GM12878 (cell line): ENCODE measurements at regions of chr6 and their contacts with region 1.

Region 1: GRCh38 chr6:15264902-15265761 is 19.3 kb downstream of the JARID2 start:
- DNase-seq: no peak
- ATAC-seq: peak; percentile 45
- H3K4me3 ChIP-seq: peak overlapping the region; percentile 26; the same call in 1 of the 2 replicates
- H3K27ac ChIP-seq: peak overlapping the region; percentile 62
- H3K4me1 ChIP-seq: peaks cover 61% of the 10 kb centered on the region
- H3K27me3 ChIP-seq: no peaks in the 10 kb centered on the region
- CTCF ChIP-seq: no peak
- EP300 ChIP-seq: no peak
- POLR2A ChIP-seq: no peak
- RAD21 ChIP-seq: no peak

Region 2: GRCh38 chr6:14986370-14986769 is 278.8 kb before region 1 on chr6:
- CTCF ChIA-PET with region 1: no interaction called
- POLR2A ChIA-PET with region 1: no interaction called
- RAD21 ChIA-PET with region 1: no interaction called
- SMC1A ChIA-PET with region 1: no interaction called
- in situ Hi-C with region 1: no loop called
- intact Hi-C with region 1: no loop called
- DNase-seq: no peak
- ATAC-seq: no peak
- H3K4me3 ChIP-seq: no peak overlapping the region
- H3K27ac ChIP-seq: no peak overlapping the region
- H3K4me1 ChIP-seq: no peaks in the 10 kb centered on the region
- H3K27me3 ChIP-seq: no peaks in the 10 kb centered on the region
- CTCF ChIP-seq: no peak
- EP300 ChIP-seq: no peak
- POLR2A ChIP-seq: no peak
- RAD21 ChIP-seq: no peak

Region 3: GRCh38 chr6:15280028-15280427 is 14.9 kb after region 1 on chr6:
- CTCF ChIA-PET with region 1: interaction called, 10 read pairs
- POLR2A ChIA-PET with region 1: interaction called, 10 read pairs
- RAD21 ChIA-PET with region 1: interaction called, 49 read pairs
- SMC1A ChIA-PET with region 1: interaction called, 89 read pairs
- in situ Hi-C with region 1: no loop called
- intact Hi-C with region 1: no loop called
- DNase-seq: no peak
- ATAC-seq: no peak
- H3K4me3 ChIP-seq: peak overlapping the region; percentile 40; the same call in 1 of the 2 replicates
- H3K27ac ChIP-seq: peak overlapping the region; percentile 37; the same call in 1 of the 2 replicates
- H3K4me1 ChIP-seq: peaks cover 50% of the 10 kb centered on the region
- H3K27me3 ChIP-seq: no peaks in the 10 kb centered on the region
- CTCF ChIP-seq: no peak
- EP300 ChIP-seq: no peak
- POLR2A ChIP-seq: no peak
- RAD21 ChIP-seq: no peak

Region 4: GRCh38 chr6:15287670-15288375 is 22.7 kb after region 1 on chr6:
- CTCF ChIA-PET with region 1: interaction called, 5 read pairs
- POLR2A ChIA-PET with region 1: interaction called, 12 read pairs
- RAD21 ChIA-PET with region 1: interaction called, 22 read pairs
- SMC1A ChIA-PET with region 1: interaction called, 21 read pairs
- in situ Hi-C with region 1: no loop called
- intact Hi-C with region 1: no loop called
- DNase-seq: peak; percentile 78
- ATAC-seq: peak; percentile 99
- H3K4me3 ChIP-seq: peak overlapping the region; percentile 11; the same call in 1 of the 2 replicates
- H3K27ac ChIP-seq: peak overlapping the region; percentile 79
- H3K4me1 ChIP-seq: peaks cover 24% of the 10 kb centered on the region
- H3K27me3 ChIP-seq: no peaks in the 10 kb centered on the region
- CTCF ChIP-seq: no peak
- EP300 ChIP-seq: peak in 1 of 2 experiments; percentile 78; a peak in 2 of 4 replicates
- POLR2A ChIP-seq: no peak
- RAD21 ChIP-seq: no peak

Region 5: GRCh38 chr6:15299430-15300131 is 34.4 kb after region 1 on chr6:
- CTCF ChIA-PET with region 1: interaction called, 8 read pairs
- POLR2A ChIA-PET with region 1: interaction called, 8 read pairs
- RAD21 ChIA-PET with region 1: interaction called, 17 read pairs
- SMC1A ChIA-PET with region 1: interaction called, 34 read pairs
- in situ Hi-C with region 1: no loop called
- intact Hi-C with region 1: loop called (anchors 5 kb)
- DNase-seq: peak; percentile 90
- ATAC-seq: peak; percentile 88
- H3K4me3 ChIP-seq: peak overlapping the region; percentile 50; the same call in 1 of the 2 replicates
- H3K27ac ChIP-seq: peak overlapping the region; percentile 80
- H3K4me1 ChIP-seq: peaks cover 79% of the 10 kb centered on the region
- H3K27me3 ChIP-seq: no peaks in the 10 kb centered on the region
- CTCF ChIP-seq: no peak
- EP300 ChIP-seq: peak; percentile 59 to 84; a peak in 3 of 4 replicates
- POLR2A ChIP-seq: peak; percentile 47; the same call in 1 of the 2 replicates
- RAD21 ChIP-seq: no peak

Region 6: DNA sequence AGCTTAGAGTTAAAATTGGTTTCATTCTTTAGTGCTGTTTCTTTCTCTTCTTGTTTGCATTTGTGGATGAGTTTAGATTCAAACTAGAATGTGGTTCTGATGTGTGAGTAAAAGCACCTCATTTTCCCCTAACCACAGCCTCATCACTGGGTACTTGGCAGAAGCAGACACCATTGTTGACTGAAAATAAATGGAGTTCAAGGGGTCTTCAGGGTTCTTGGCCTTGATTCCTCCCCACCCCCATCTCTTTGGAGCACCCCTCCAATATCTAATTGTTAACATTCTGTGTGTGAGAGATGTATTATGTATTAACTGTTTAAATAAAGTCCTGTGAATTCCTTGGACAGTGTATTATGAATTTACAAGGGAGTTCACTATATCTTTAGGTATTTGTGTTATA is 40.4 kb after region 1 on chr6:
- CTCF ChIA-PET with region 1: interaction called, 3 read pairs
- POLR2A ChIA-PET with region 1: interaction called, 8 read pairs
- RAD21 ChIA-PET with region 1: interaction called, 17 read pairs
- SMC1A ChIA-PET with region 1: interaction called, 34 read pairs
- in situ Hi-C with region 1: no loop called
- intact Hi-C with region 1: loop called (anchors 5 kb)
- DNase-seq: no peak
- ATAC-seq: peak; percentile 67
- H3K4me3 ChIP-seq: peak overlapping the region; percentile 37; the same call in 1 of the 2 replicates
- H3K27ac ChIP-seq: peak overlapping the region; percentile 87
- H3K4me1 ChIP-seq: peaks cover 68% of the 10 kb centered on the region
- H3K27me3 ChIP-seq: no peaks in the 10 kb centered on the region
- CTCF ChIP-seq: no peak
- EP300 ChIP-seq: peak in 1 of 2 experiments; percentile 55; a peak in 2 of 4 replicates
- POLR2A ChIP-seq: no peak
- RAD21 ChIP-seq: no peak

Region 7: DNA sequence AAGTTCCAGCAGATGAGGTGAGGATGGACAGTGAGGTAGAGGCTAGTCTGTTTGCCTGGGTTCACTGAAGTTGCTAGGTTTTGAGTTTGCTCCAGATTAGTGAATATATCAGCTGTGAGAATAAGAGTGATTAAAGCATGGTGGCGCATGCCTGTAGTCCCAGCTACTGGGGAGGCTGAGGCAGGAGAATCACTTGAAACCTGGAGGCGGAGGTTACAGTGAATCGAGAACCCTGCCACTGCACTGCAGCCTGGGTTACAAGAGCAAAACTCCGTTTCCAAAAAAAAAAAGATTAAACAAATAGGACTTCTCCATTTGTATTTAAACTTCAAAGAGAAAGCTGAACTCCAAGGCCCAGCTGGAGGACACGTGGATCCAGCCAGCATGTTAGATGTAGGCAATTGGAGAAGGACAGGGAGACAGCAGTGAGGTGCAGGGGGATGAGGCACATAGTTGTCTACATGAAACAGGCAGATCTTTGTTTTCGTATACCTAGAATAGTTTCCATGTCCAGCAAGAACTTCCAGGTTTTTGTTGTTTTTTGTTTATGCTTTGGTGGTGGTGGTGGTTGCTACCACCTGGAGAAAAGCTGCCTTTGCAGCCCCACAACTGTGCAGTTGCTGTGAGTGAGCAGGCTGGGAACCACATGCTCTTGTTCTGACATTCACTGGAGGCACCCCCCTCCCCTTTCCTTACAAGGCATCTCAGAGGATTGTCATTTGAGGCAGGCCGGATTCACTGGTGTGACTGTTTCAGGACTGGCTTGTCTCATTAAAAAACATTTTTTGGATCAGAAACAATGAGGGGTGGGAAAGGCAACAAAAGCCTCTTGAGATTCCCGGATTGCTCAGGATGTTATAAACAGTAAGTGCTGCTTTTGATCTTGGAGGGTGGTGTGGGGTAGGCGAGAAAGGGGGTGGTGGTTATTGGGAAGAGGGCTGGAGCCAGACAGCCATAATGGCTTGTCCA is 53.1 kb after region 1 on chr6:
- CTCF ChIA-PET with region 1: interaction called, 4 read pairs
- POLR2A ChIA-PET with region 1: interaction called, 6 read pairs
- RAD21 ChIA-PET with region 1: interaction called, 17 read pairs
- SMC1A ChIA-PET with region 1: interaction called, 29 read pairs
- in situ Hi-C with region 1: no loop called
- intact Hi-C with region 1: no loop called
- DNase-seq: no peak
- ATAC-seq: peak; percentile 52
- H3K4me3 ChIP-seq: peak overlapping the region; percentile 44; the same call in 1 of the 2 replicates
- H3K27ac ChIP-seq: peak overlapping the region; percentile 82
- H3K4me1 ChIP-seq: peaks cover 73% of the 10 kb centered on the region
- H3K27me3 ChIP-seq: no peaks in the 10 kb centered on the region
- CTCF ChIP-seq: no peak
- EP300 ChIP-seq: no peak
- POLR2A ChIP-seq: no peak
- RAD21 ChIP-seq: no peak

Region 8: DNA sequence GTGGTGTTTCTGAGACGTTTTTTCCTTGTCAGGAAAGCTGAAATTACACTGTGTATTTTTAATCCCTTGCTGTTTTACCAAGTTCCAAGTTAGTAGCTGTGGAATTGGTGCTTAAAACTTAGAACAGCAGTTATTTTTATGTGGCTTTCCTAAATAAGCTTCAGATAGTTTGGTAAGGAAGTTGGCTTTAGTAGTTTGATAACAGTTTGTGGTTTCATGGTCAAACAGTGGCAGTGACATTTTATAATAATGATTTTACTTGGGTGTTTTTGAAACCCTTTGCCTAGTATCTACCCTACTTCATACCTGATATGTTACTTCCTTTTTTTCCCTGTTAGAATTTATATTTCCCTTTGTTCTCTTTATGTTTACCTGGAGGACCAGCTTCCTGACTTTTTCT is 145.6 kb after region 1 on chr6:
- CTCF ChIA-PET with region 1: no interaction called
- POLR2A ChIA-PET with region 1: no interaction called
- RAD21 ChIA-PET with region 1: no interaction called
- SMC1A ChIA-PET with region 1: no interaction called
- in situ Hi-C with region 1: no loop called
- intact Hi-C with region 1: no loop called
- DNase-seq: no peak
- ATAC-seq: peak; percentile 51
- H3K4me3 ChIP-seq: no peak overlapping the region
- H3K27ac ChIP-seq: peak overlapping the region; percentile 27; the same call in 1 of the 2 replicates
- H3K4me1 ChIP-seq: peaks cover 29% of the 10 kb centered on the region
- H3K27me3 ChIP-seq: no peaks in the 10 kb centered on the region
- CTCF ChIP-seq: no peak
- EP300 ChIP-seq: peak; percentile 35 to 37; a peak in 2 of 4 replicates
- POLR2A ChIP-seq: no peak
- RAD21 ChIP-seq: no peak